ENCODE measurements at regions of chr18 and their contacts with region 1.

Region 1: DNA sequence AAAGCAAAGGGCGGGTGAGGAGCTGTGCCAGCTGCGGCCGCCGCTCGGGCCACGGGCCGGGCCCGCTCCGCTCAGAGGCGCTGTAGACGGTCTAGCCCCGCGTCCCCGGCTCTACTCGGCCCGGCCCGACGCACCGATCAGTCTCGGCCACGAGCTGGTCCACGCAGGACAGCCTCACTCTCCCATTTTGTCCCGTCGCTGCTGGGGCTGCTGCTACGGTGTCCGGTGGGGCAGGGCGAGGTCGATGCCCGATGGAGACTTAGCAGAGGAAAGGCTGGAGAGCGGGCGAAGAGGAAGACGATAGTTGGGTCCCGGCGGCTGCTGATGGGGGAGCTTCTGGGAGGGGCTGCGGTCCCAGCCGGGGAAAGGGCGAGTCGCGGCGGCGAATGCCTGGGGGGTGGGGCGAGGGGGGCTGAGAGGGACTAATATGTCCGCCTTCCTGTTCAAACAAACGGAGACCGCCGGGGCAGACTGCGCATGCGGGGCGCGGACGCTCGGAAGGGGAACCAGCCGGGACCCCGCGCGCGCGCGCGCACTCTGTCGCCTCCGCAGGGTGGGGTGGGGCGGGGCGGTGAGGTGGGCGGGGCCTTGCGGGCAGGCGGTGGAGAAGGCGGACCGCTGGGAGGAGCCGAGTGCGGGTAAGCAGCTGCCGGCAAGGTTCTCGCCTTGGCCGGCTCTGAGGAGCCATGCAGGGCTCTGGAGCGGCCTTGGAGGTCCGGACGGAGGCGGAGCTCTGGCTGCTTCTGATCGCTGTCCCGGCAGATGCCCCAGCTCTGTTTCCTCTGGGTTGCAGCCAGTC is at the start of gene ROCK1:
- DNase-seq: peak; percentile 97
- ATAC-seq: peak; percentile 87
- H3K4me3 ChIP-seq: peak within 1 kb of the TSS; percentile 96 to 100 (median 98)
- H3K4me3 Mint-ChIP-seq: peak within 1 kb of the TSS; percentile 92
- H3K27ac ChIP-seq: peak within 1 kb of the TSS; percentile 94 to 96
- H3K27ac Mint-ChIP-seq: peak within 1 kb of the TSS; percentile 99
- H3K4me1 ChIP-seq: peaks cover 28 to 38% of the 10 kb centered on the region in 2 donors
- H3K4me1 Mint-ChIP-seq: peaks cover 8% of the 10 kb centered on the region
- H3K27me3 ChIP-seq: no peaks in the 10 kb centered on the region
- H3K27me3 Mint-ChIP-seq: no peaks in the 10 kb centered on the region
- CTCF ChIP-seq: no peak
- total RNA-seq, gene ROCK1: 102 and 103 TPM in 2 replicates

Region 2: DNA sequence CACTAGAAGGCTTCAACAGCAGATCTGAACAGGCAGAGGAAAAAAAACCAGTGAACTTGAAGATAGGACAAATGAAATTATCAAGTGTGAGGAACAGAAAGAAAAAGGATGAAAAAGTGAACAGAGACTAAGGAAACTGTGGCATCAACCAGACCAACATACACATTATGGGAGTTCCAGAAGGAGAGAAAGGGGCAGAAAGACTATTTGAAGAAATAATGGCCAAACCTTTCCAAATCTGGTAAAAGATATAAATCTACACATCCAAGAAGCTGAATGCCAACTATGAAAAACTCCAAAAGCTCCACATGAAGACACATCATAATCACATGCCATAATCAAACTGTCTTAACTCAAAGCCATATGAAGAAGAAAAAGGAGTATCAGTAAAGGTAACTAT is 79.7 kb before region 1 on chr18:
- CTCF ChIA-PET with region 1: no interaction called
- POLR2A ChIA-PET with region 1: interaction called, 7 read pairs
- intact Hi-C with region 1: loop called (anchors 5 kb)
- DNase-seq: no peak
- ATAC-seq: no peak
- H3K4me3 ChIP-seq: no peak overlapping the region
- H3K4me3 Mint-ChIP-seq: no peak overlapping the region
- H3K27ac ChIP-seq: no peak overlapping the region
- H3K27ac Mint-ChIP-seq: no peak overlapping the region
- H3K4me1 ChIP-seq: no peaks in the 10 kb centered on the region
- H3K4me1 Mint-ChIP-seq: peaks cover 13% of the 10 kb centered on the region
- H3K27me3 ChIP-seq: no peaks in the 10 kb centered on the region
- H3K27me3 Mint-ChIP-seq: no peaks in the 10 kb centered on the region
- CTCF ChIP-seq: no peak

Region 3: GRCh38 chr18:21053127-21053526 is 58.4 kb before region 1 on chr18:
- CTCF ChIA-PET with region 1: interaction called, 3 read pairs
- POLR2A ChIA-PET with region 1: no interaction called
- intact Hi-C with region 1: loop called (anchors 5 kb)
- DNase-seq: no peak
- ATAC-seq: no peak
- H3K4me3 ChIP-seq: no peak overlapping the region
- H3K4me3 Mint-ChIP-seq: no peak overlapping the region
- H3K27ac ChIP-seq: no peak overlapping the region
- H3K27ac Mint-ChIP-seq: no peak overlapping the region
- H3K4me1 ChIP-seq: peaks cover 19 to 40% of the 10 kb centered on the region in 2 donors
- H3K4me1 Mint-ChIP-seq: peaks cover 33% of the 10 kb centered on the region
- H3K27me3 ChIP-seq: no peaks in the 10 kb centered on the region
- H3K27me3 Mint-ChIP-seq: no peaks in the 10 kb centered on the region
- CTCF ChIP-seq: no peak

Region 4: DNA sequence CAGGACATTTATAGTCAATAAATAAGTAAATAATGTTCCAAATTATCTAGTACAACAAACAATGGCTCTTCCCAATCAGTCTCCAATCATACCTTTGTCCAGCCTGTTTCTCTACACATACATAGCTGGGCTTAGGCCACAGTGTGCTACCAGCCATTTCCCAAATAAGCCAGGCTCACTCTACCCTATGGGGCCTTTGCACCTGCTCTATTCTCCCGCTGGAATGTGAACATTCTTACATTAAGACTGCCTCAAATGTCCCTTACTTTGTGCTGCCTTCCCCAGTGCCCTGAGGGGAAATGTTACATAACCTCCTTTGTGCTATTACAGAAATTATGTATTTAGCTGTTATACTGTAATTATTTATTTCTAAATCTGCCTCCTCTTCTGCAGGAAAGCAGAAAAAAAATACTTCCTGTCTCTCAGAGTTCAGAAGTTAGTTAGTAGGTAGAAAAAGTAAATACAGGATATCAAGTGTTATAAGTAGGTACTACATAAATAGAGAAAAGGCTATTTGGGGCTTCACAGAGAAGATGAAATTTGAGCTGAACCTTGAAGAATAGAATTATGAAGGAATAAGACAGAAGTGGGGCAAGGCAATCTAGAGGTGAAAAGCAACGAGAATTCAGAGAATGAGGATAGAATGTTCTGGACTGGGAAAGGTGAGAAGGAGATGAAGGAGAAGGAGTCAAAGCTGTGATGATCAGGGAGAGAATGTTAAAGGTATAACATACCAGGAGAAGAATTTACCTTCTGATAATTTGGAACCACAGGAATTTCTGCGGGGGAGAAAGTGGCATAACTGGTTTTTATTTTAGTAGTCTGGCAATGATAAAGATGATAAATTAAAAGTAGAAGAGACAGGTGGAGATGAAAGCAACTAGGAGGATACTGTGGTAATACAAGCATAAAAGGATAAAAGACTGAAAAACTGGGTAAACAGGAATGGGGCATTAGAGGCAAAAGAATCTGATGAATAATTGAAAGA is 36.9 kb before region 1 on chr18:
- CTCF ChIA-PET with region 1: no interaction called
- POLR2A ChIA-PET with region 1: interaction called, 4 read pairs
- intact Hi-C with region 1: loop called (anchors 2 kb)
- DNase-seq: no peak
- ATAC-seq: no peak
- H3K4me3 ChIP-seq: peak overlapping the region in 1 of 5 experiments; percentile 27
- H3K4me3 Mint-ChIP-seq: peak overlapping the region; percentile 55
- H3K27ac ChIP-seq: peak overlapping the region in 1 of 2 donors; percentile 43
- H3K27ac Mint-ChIP-seq: peak overlapping the region; percentile 56
- H3K4me1 ChIP-seq: peaks cover 54 to 65% of the 10 kb centered on the region in 2 donors
- H3K4me1 Mint-ChIP-seq: peaks cover 78% of the 10 kb centered on the region
- H3K27me3 ChIP-seq: no peaks in the 10 kb centered on the region
- H3K27me3 Mint-ChIP-seq: no peaks in the 10 kb centered on the region
- CTCF ChIP-seq: no peak

Region 5: GRCh38 chr18:21099442-21099841 is 12.1 kb before region 1 on chr18:
- CTCF ChIA-PET with region 1: interaction called, 4 read pairs
- POLR2A ChIA-PET with region 1: interaction called, 4 read pairs
- intact Hi-C with region 1: loop called (anchors 1 kb)
- DNase-seq: peak; percentile 66
- ATAC-seq: peak; percentile 85
- H3K4me3 ChIP-seq: peak overlapping the region in 1 of 5 experiments; percentile 27
- H3K4me3 Mint-ChIP-seq: peak overlapping the region; percentile 67
- H3K27ac ChIP-seq: peak overlapping the region; percentile 52 to 75
- H3K27ac Mint-ChIP-seq: peak overlapping the region; percentile 79
- H3K4me1 ChIP-seq: peaks cover 20 to 63% of the 10 kb centered on the region in 2 donors
- H3K4me1 Mint-ChIP-seq: peaks cover 72% of the 10 kb centered on the region
- H3K27me3 ChIP-seq: no peaks in the 10 kb centered on the region
- H3K27me3 Mint-ChIP-seq: no peaks in the 10 kb centered on the region
- CTCF ChIP-seq: no peak

Region 6: GRCh38 chr18:21123290-21123926 is 11.9 kb after region 1 on chr18:
- CTCF ChIA-PET with region 1: no interaction called
- POLR2A ChIA-PET with region 1: no interaction called
- intact Hi-C with region 1: no loop called
- DNase-seq: no peak
- ATAC-seq: no peak
- H3K4me3 ChIP-seq: no peak overlapping the region
- H3K4me3 Mint-ChIP-seq: no peak overlapping the region
- H3K27ac ChIP-seq: no peak overlapping the region
- H3K27ac Mint-ChIP-seq: no peak overlapping the region
- H3K4me1 ChIP-seq: no peaks in the 10 kb centered on the region
- H3K4me1 Mint-ChIP-seq: peaks cover 2% of the 10 kb centered on the region
- H3K27me3 ChIP-seq: no peaks in the 10 kb centered on the region
- H3K27me3 Mint-ChIP-seq: peaks cover 4% of the 10 kb centered on the region
- CTCF ChIP-seq: no peak